Cardiac septum (tissue), 1 donor: ENCODE measurements at regions of chr12 and their contacts with region 1.

Region 1: GRCh38 chr12:53098982-53099651 is 1.6 kb downstream of the IGFBP6 start:
- DNase-seq: peak; percentile 94

Region 2: GRCh38 chr12:53065975-53066931 is 32.9 kb before region 1 on chr12:
- intact Hi-C with region 1: loop called (anchors 1 kb)
- DNase-seq: peak; percentile 88

Region 3: DNA sequence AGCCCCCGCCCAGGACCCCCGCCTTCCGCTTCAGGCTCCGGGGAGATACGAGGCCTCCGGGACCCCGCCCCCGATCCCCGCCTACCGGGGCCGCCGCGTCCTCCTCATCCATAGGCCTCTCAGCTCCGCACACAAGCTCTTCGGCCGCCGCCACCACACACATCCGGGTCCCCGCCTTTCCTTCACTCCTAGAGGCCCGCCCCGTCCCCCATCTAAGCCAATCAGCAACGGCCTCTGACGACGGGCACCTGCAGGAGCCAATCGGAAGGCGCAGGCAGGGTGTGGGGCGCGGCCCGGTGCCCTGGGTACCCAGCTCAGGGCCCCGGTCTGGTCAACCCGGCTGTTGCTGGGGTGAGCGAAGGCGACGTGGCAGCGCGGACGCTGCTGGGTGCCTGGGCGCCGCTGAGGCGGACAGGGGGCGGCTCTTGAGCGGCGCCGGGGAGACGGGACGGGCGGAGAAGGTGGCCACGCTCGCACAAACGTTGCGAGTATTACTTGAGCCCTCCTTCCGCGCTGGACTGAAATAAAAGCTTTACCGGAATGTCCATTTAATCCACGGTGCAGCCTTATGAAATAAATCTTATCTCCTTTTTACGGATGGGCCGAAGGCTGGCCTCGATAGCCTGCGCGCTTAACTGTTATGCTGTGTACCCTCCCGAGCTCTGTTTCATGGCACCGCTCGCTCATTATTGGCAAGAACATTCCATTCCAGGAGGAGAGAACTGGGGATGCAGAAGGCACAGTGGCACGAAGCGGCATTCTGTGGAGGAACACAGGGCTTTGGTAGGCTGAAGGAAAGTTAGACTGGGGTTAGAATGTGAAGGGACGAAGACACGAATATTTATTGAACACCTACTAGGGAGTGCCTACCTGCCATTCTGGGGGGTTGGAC is 19.6 kb before region 1 on chr12 and contains the start of gene SPRYD3:
- intact Hi-C with region 1: loop called (anchors 2 kb)
- DNase-seq: peak; percentile 99
- total RNA-seq, gene SPRYD3: 63.5 TPM

Region 4: DNA sequence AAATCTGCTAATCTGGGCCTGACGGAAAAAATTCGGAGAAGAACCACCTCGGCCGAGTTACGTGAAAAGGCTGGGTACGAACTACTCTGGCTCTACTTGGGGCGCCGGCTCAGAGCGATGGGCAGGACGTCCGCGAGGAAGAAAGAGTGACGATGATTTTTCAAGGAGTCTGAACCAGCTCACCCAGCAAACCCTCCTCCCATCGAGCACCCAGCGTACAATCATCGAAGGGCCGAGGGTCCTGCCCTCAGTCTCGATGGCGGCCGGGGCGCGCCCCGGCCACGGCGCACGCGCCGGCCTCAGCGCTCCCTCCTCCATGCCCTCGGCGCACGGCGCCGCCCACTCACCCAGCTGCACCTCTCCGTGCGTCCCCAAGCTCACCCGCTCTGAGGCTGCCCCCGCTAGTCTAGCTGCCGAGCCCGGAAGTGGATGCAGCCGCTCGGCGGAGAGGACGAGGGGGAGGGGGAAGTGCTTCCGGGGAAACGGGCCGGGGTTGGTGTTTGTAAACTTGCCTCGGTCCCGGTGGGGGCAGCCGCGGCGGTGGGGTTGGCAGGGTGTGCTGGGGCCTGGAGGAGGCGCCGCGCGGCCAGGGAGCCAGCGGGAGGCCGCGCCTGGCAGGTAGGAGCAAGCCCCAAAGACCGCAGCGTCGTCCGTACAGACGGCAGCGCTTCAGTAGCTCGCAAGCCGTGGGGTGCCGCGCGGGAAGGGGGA is 81.3 kb after region 1 on chr12 and contains the starts of genes CSAD and ZNF740:
- intact Hi-C with region 1: no loop called
- DNase-seq: peak; percentile 98
- total RNA-seq, gene CSAD: 16.5 TPM
- total RNA-seq, gene ZNF740: 19.2 TPM